PC-9 (cell line): ENCODE measurements at regions of chr2 and their contacts with region 1.

Region 1: GRCh38 chr2:26577434-26578112 is 63.6 kb downstream of the CIB4 start:
- DNase-seq: peak; percentile 42 to 63
- H3K4me3 ChIP-seq: no peak overlapping the region
- H3K27ac ChIP-seq: no peak overlapping the region
- H3K4me1 ChIP-seq: peaks cover 15% of the 10 kb centered on the region
- H3K27me3 ChIP-seq: peaks cover 20% of the 10 kb centered on the region; the same call in 1 of the 2 replicates
- CTCF ChIP-seq: peak; percentile 98

Region 2: DNA sequence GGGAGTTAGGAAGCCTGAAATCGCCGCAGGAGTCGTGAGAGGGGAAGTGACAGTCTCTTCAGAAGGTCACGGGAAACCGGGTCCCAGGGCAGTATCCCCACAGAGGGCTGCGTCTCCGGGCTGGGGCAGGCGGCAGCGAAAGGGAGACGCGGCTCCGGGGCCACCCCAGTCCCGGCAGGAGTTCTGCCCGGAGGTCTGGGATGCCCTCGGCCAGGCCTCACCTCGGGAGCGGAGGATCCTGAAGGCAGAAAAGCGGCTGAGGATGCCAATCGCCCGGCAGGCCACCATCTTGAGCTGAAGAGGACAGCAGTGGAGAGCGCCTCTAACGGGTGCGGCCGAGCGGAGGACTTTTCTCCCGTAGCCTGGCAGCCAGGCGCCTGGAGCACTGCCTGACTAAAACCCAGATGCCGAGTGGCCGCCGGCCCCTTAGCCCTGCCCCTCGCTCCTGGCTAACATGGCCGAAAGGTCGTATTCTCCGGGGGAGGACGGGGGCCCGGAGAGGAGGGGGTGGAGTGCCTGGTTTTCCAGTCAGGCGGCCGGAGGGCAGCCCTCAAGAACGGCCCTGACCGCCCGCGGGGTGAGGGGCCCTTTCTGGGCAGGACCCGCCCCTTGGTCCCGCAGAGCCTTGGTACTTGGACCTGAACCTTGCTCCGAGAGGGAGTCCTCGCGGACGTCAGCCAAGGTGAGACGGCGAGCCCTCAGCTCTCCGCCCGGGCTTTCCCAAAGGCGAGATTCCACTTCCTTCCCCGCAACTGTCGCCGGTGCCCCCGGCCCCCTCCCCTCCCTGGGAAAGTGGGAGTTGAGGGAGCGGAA is 333.1 kb before region 1 on chr2 and contains the starts of genes HADHA and HADHB:
- CTCF ChIA-PET with region 1: no interaction called
- POLR2A ChIA-PET with region 1: no interaction called
- intact Hi-C with region 1: loop called (anchors 10 kb)
- DNase-seq: peak; percentile 82 to 91
- H3K4me3 ChIP-seq: peak within 1 kb of the TSS; percentile 95
- H3K27ac ChIP-seq: peak within 1 kb of the TSS; percentile 75
- H3K4me1 ChIP-seq: peaks cover 41% of the 10 kb centered on the region
- H3K27me3 ChIP-seq: no peaks in the 10 kb centered on the region
- CTCF ChIP-seq: no peak; the same call in 1 of the 2 replicates
- total RNA-seq, gene HADHA: 99.9 and 129 TPM in 2 replicates
- total RNA-seq, gene HADHB: 72.7 and 73.1 TPM in 2 replicates

Region 3: GRCh38 chr2:26503231-26503880 is 74.2 kb before region 1 on chr2:
- CTCF ChIA-PET with region 1: interaction called, 3 read pairs
- POLR2A ChIA-PET with region 1: no interaction called
- intact Hi-C with region 1: loop called (anchors 2 kb)
- DNase-seq: peak; percentile 59 to 81
- H3K4me3 ChIP-seq: peak overlapping the region; percentile 50; the same call in 1 of the 2 replicates
- H3K27ac ChIP-seq: no peak overlapping the region
- H3K4me1 ChIP-seq: 0 out of 2 replicates have a peak, but pooled peaks cover 6% of the 10 kb centered on the region
- H3K27me3 ChIP-seq: peaks cover 61% of the 10 kb centered on the region
- CTCF ChIP-seq: peak; percentile 85

Region 4: DNA sequence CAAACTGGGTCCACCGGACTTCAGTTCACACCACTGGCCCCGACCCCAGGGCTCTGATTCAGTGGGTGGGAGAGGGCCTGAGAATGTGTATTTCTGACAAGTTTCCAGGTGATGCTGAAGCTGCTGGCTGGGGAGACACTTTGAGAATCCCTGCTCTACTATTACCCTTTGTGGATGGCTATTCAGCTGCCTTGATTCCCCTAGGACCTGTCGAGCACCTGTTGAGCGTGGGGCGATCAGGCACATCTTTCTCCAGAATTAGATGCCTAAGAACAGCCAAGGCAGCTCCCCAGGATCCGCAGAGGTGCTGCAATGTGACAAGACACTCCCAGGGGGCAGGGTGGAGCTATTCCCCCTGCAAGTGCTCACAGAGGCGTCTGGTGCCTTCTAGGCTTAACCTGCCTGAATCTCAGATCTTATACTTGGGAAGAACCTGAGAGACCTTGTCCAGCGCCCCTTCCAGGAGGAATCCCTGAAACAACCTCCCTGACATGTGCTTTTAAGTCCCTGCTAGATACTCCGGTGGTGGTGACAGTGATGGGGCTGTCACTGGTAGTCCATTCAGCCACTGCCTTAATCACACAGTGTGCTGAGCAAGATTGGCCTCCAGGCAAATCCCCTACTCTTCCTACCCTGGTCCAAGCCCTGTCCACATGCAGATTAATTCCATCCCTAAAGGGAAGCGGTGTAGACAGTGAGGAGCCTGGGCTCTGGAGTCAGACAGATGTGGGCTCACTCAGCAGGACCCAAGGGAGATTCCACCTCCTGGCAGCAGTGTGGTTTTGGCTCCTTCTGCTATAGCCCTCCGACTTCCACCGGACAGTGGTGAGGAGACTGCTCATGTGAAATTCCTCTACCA is 56.3 kb before region 1 on chr2:
- CTCF ChIA-PET with region 1: no interaction called
- POLR2A ChIA-PET with region 1: no interaction called
- intact Hi-C with region 1: loop called (anchors 5 kb)
- DNase-seq: peak in 1 of 2 experiments; percentile 23
- H3K4me3 ChIP-seq: no peak overlapping the region
- H3K27ac ChIP-seq: no peak overlapping the region
- H3K4me1 ChIP-seq: no peaks in the 10 kb centered on the region
- H3K27me3 ChIP-seq: peaks cover 59% of the 10 kb centered on the region
- CTCF ChIP-seq: peak; percentile 58

Region 5: DNA sequence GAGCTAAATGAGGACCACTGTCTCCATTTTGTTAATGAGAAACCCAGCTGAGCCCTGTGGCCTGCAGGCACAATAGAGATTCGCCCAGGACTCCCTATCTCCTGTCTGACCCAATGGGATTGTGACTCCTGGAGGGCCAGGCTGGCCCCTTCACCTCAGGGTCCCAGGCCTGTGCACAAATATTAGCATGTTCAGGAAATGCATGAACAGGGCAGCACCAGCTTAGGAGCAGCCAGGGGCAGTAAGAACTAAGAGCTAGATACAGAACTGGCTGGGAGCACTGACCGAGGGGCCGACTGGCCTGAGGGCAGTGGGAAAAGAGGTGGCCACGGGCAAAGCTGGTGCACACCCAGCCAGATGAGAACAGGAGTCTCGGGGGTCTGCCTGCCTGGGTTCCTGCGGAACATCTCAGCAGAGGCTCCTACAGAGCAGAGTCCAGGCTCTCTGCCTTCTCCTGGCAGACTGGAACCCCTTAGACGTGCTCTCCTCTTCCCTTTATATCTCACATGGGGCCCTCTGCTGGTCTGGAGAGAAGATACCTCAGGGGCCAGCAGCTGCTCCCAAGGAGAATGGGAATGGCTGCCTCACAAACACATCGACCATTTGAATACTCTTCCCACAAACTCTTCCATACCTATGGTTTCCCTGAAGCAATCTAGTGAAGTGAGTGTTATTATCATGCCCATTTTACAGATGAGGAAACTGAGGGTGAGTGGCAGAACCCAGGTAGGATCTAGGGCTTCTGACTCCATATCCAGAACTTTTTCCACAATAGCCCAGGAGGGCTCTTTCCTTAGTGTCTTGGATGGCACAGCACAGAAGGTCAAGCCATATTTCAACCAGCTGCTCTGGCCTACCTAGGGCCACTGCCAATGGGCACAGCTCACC is 22.1 kb before region 1 on chr2:
- CTCF ChIA-PET with region 1: interaction called, 17 read pairs
- POLR2A ChIA-PET with region 1: no interaction called
- intact Hi-C with region 1: no loop called
- DNase-seq: no peak
- H3K4me3 ChIP-seq: no peak overlapping the region
- H3K27ac ChIP-seq: no peak overlapping the region
- H3K4me1 ChIP-seq: no peaks in the 10 kb centered on the region
- H3K27me3 ChIP-seq: peaks cover 27% of the 10 kb centered on the region
- CTCF ChIP-seq: no peak

Region 6: DNA sequence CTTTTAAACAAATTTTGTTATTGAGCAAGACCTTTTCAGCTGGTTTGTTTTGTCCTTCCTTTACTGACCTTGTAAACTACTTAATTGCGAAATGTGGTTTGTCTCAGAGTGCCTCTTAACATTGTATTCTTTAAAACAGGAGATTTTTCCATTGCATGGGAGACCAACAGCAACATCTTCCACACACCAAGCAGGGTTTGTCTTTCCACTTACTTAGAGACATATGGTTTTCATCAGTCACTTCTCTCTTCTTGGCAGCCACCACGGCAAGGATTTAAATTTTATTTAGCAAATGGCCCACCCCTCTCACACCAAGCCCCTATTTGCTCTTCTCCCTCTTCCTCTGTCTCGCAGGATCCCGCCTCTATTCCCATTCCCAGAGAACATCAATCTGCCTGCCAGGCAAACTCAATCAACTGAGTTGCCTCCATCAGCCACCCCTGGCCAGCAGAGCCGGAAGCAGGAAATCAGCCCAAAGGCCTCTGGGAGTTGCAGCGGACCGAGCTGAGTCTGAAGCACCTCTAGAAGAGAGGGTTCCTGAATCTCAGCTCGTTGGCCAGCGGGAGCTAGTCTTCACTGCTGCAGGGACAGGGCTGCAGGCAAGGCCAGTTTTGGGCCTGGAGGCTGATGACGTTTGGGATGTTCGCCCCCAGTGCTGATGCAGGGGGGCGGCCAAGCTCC is 74.9 kb after region 1 on chr2:
- CTCF ChIA-PET with region 1: no interaction called
- POLR2A ChIA-PET with region 1: no interaction called
- intact Hi-C with region 1: no loop called
- DNase-seq: no peak
- H3K4me3 ChIP-seq: no peak overlapping the region
- H3K27ac ChIP-seq: no peak overlapping the region
- H3K4me1 ChIP-seq: 0 out of 2 replicates have a peak, but pooled peaks cover 4% of the 10 kb centered on the region
- H3K27me3 ChIP-seq: no peaks in the 10 kb centered on the region
- CTCF ChIP-seq: no peak